Activated CD8-positive, alpha-beta T cell treated with anti-CD3 and anti-CD28 coated beads for 36 hours (primary cell): ENCODE measurements at regions of chr14 and their contacts with region 1.

Region 1: DNA sequence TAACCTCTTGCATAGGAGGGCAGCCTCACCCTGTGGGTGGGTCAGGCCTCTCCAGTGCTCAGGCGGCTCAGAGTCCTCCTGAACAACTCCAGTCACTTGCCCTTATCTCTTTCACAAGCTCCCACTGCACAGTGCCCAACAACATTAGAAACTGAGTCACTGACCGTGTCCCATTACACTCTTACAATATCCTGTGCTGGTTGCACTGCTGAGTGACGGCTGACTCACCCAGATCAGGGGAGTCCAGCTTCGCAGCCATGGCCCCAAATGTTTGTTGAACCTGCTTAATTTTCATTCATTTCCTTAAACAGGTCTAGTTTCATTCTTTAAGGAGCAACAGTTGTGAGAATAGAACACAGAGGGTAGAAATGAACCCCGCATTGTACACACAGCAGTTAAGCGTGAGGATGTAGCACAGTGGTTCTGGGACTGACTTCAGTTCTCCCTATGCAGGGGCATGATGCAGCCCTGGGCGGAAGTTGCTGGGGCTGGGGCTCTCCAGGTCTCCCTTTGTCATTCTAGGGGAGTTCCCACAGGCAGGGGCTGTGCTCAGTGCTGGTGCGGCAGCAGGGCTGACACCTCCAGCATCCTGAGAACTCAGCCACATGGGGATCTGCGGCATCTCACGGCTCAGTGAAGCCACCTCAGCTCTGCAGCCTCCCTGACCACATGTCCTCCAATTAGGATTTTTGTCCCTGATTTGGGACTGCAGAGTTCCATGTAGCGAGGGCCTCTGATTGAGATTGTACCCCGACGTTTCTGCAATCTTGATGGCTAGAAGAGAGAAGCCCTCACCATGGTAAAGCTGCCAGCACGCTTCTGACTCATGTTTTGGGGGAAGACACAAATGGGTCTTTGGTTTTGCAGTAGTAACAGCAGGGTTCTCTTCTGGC is 16.1 kb downstream of the GPR68 start:
- DNase-seq: peak; percentile 96
- ATAC-seq: peak; percentile 84
- H3K4me3 Mint-ChIP-seq: peak overlapping the region; percentile 68
- H3K27ac Mint-ChIP-seq: peak overlapping the region; percentile 99
- H3K4me1 Mint-ChIP-seq: peaks cover 87% of the 10 kb centered on the region
- H3K27me3 Mint-ChIP-seq: no peaks in the 10 kb centered on the region
- CTCF ChIP-seq: no peak

Region 2: DNA sequence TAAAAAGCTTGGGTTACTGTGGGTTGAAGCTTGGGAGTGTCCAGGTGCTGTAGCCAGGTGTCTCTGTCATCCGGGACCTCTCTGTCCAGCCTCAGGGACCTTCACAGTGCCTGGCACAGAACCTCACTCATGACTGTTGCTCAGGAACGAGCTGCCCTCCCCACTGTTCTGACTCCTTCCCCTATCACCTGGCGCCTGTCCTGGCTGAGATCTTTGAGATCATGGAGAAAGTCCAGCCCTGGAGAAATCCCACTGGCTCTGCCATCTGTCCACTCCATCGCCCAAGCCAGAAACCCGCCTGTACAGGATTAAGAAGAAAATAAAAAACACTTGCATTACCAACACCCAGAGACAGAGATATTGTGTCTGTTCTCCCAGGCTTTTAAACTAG is 61.0 kb before region 1 on chr14:
- CTCF ChIA-PET with region 1: no interaction called
- POLR2A ChIA-PET with region 1: no interaction called
- intact Hi-C with region 1: no loop called
- DNase-seq: no peak
- ATAC-seq: no peak
- H3K4me3 Mint-ChIP-seq: no peak overlapping the region
- H3K27ac Mint-ChIP-seq: no peak overlapping the region
- H3K4me1 Mint-ChIP-seq: no peaks in the 10 kb centered on the region
- H3K27me3 Mint-ChIP-seq: no peaks in the 10 kb centered on the region
- CTCF ChIP-seq: no peak

Region 3: GRCh38 chr14:91193069-91193468 is 35.3 kb before region 1 on chr14:
- CTCF ChIA-PET with region 1: no interaction called
- POLR2A ChIA-PET with region 1: interaction called, 10 read pairs
- intact Hi-C with region 1: no loop called
- DNase-seq: no peak
- ATAC-seq: no peak
- H3K4me3 Mint-ChIP-seq: no peak overlapping the region
- H3K27ac Mint-ChIP-seq: no peak overlapping the region
- H3K4me1 Mint-ChIP-seq: peaks cover 24% of the 10 kb centered on the region
- H3K27me3 Mint-ChIP-seq: no peaks in the 10 kb centered on the region
- CTCF ChIP-seq: no peak

Region 4: DNA sequence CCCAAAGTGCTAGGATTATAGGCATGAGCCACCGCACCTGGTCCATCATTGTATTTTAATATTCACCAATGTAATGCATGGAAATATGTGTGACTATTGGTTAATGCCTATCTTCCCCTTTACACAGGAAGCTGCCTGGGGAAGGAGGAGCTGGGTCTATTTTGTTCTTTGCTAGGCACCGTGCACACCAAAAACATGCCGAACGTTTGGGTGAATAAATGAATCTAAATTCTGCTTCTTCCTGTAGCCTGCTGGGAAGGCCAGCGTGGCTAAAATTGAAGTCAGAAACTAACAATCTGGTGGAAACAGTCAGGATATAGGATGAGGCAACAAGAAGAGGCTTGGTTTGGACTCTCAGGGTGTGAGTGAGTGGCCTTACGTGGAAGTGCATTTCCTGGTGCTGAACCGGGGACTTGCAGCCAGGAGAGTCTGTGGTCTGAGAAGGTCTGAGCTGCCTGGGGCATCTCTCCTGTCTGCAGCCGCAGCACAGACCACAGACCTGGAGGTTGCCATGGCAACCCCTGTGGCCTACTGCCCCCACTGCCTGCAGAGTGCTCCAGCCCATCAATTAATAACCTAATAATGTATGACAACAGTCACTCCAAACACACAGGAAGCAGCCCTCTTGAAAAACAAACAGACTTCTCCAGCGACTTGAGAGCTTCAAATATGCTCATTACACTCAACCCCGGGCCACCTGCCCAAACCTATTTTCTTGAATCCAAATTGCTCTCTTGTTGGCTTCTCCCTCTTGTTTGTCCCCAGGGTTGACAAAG is 21.7 kb after region 1 on chr14:
- CTCF ChIA-PET with region 1: interaction called, 58 read pairs
- POLR2A ChIA-PET with region 1: interaction called, 274 read pairs
- intact Hi-C with region 1: loop called (anchors 1 kb)
- DNase-seq: peak; percentile 70
- ATAC-seq: peak; percentile 11
- H3K4me3 Mint-ChIP-seq: peak overlapping the region; percentile 54
- H3K27ac Mint-ChIP-seq: peak overlapping the region; percentile 93
- H3K4me1 Mint-ChIP-seq: peaks cover 84% of the 10 kb centered on the region
- H3K27me3 Mint-ChIP-seq: peaks cover under 1% of the 10 kb centered on the region
- CTCF ChIP-seq: no peak

Region 5: DNA sequence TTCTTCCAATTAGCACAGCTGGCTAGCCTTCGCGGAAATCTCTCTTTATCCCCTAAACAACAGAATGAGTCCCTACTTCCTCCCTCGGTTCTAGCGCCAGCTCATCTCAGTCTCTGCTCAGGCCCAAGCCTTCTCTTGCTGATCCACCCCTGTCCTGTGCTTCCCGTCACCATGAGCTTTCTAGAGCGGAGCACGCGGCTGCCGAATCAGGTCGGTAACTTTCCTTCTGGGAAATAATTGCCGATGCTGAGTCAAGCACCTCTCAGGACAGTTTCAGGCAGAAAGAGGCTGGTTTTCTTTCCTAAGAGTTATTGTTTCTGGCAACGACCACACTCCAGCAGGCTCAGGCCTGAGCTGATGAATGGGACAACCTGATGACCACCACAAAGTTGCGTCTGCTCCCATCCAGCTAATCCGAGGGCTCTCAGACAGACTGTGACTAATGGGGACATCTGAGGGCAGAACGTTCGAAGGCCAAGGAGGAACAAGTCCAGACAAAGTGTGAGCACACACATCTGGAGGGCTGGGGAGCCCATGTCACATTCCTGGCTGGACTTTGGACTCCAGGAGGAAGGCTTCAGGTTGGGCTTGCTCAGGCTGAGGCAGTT is 29.8 kb after region 1 on chr14:
- CTCF ChIA-PET with region 1: interaction called, 3 read pairs
- POLR2A ChIA-PET with region 1: interaction called, 16 read pairs
- intact Hi-C with region 1: loop called (anchors 5 kb)
- DNase-seq: no peak
- ATAC-seq: no peak
- H3K4me3 Mint-ChIP-seq: no peak overlapping the region
- H3K27ac Mint-ChIP-seq: no peak overlapping the region
- H3K4me1 Mint-ChIP-seq: peaks cover 54% of the 10 kb centered on the region
- H3K27me3 Mint-ChIP-seq: peaks cover 1% of the 10 kb centered on the region
- CTCF ChIP-seq: no peak

Region 6: GRCh38 chr14:91264151-91265150 is 36.1 kb after region 1 on chr14:
- CTCF ChIA-PET with region 1: no interaction called
- POLR2A ChIA-PET with region 1: interaction called, 6 read pairs
- intact Hi-C with region 1: loop called (anchors 5 kb)
- DNase-seq: peak; percentile 32
- ATAC-seq: peak; percentile 32
- H3K4me3 Mint-ChIP-seq: peak overlapping the region; percentile 54
- H3K27ac Mint-ChIP-seq: peak overlapping the region; percentile 63
- H3K4me1 Mint-ChIP-seq: peaks cover 51% of the 10 kb centered on the region
- H3K27me3 Mint-ChIP-seq: no peaks in the 10 kb centered on the region
- CTCF ChIP-seq: no peak

Region 7: DNA sequence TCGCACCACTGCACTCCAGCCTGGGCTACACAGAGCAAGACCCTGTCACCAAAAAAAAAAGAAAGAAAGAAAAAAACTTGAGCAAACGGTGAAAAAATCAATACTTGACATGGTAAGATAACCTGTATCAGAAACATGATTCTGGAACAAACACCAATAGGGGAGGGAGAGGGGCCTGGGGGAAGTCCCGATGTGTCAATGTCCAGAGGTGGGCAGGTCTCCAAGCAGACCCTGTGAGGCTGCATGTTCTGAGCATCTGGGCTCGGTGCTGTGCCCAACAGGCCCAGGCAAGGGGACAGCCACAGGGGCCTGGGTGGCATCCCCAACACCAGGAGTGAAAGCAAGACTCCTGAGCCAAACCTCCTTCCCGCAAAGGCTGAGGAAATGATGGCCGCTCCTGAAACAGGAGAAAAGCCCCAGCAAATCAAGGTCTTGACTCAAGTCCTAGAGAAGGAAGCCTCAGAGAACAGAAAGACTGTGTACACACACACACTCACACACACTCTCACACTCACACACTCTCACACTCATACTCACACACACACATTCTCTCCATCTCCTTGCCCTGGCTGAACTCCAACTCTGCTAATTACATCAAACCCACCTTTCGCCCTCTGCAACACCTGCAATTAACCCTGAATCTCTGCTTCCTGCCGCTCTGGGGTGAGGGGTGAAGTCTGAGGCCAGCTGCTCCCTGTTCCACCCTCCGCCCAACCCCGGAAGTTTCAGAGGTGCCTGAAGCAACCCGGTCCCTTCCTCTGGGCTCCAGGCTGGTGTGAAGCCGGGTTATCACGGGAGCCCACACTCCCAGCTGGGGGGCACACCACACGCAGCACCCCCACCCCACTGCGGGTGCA is 168.8 kb after region 1 on chr14:
- CTCF ChIA-PET with region 1: no interaction called
- POLR2A ChIA-PET with region 1: no interaction called
- intact Hi-C with region 1: no loop called
- DNase-seq: peak; percentile 80
- ATAC-seq: peak; percentile 73
- H3K4me3 Mint-ChIP-seq: peak overlapping the region; percentile 70
- H3K27ac Mint-ChIP-seq: peak overlapping the region; percentile 95
- H3K4me1 Mint-ChIP-seq: peaks cover 89% of the 10 kb centered on the region
- H3K27me3 Mint-ChIP-seq: no peaks in the 10 kb centered on the region
- CTCF ChIP-seq: no peak